ENCODE measurements at regions of chr6 and their contacts with region 1.

Region 1: GRCh38 chr6:16761471-16762267 is 409 bp upstream of the ATXN1 start:
- DNase-seq: peak; percentile 79
- H3K4me3 ChIP-seq: peak overlapping the region; percentile 58 to 81
- H3K27ac ChIP-seq: peak overlapping the region; percentile 77 to 90
- H3K4me1 ChIP-seq: peaks cover 12 to 28% of the 10 kb centered on the region in 2 experiments; a peak in 3 of 4 replicates
- H3K27me3 ChIP-seq: no peaks in the 10 kb centered on the region
- CTCF ChIP-seq: peak; percentile 51
- EP300 ChIP-seq: peak in 1 of 2 experiments; percentile 49; a peak in 1 of 4 replicates
- RAD21 ChIP-seq: peak; percentile 24; the same call in 1 of the 2 replicates

Region 2: DNA sequence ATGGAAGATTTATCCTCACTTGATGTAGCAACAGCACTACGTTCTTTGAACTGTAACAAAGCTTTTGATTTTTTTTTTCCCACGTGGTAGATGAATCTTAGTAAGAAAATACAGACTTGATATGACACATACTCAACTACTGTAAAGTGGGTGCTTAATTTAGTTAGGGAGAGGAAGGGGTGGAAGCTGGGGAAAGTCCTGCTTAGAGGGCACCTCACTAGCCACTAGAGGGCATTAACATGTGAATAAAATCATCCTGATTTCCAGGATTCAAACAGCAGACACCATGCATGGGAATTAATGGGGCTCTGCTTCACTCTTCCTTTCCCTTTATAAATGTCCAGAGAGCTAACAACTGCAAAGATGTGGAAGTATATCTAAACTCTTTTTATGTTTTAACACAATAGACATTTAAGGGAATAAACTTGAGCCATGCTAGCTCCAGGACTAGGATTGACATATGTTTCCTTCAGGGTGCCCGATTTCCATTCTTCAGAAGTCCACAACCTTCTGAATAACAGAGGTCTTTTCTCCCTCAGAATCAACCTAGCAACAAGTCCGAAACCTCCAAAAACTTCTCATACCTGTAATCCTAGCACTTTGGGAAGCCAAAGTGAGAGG is 250.5 kb before region 1 on chr6:
- CTCF ChIA-PET with region 1: interaction called, 33 read pairs
- POLR2A ChIA-PET with region 1: no interaction called
- DNase-seq: peak; percentile 38
- H3K4me3 ChIP-seq: no peak overlapping the region
- H3K27ac ChIP-seq: no peak overlapping the region
- H3K4me1 ChIP-seq: peaks cover 2 to 3% of the 10 kb centered on the region in 2 experiments; a peak in 2 of 4 replicates
- H3K27me3 ChIP-seq: no peaks in the 10 kb centered on the region
- CTCF ChIP-seq: peak; percentile 75
- EP300 ChIP-seq: no peak
- RAD21 ChIP-seq: peak; percentile 54

Region 3: DNA sequence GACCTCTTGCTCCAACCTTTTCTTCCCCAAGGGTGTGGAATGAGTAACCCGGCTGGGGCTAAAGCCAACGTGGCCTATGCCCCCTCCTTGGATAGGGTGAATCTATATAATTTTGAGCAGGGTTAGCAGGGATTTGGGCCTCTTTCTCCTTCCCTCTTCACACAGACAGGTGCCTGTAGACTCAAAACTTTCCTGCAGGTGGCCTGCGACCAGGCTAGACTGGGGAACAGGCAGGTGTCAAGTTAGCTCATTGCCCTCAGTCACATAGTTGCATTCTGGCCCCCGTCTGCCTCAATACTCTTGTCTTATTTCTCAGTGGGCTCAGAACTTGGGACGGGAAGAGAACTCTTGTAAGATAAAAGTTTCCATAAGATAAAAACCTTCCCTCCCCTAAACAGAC is 243.4 kb before region 1 on chr6:
- CTCF ChIA-PET with region 1: interaction called, 33 read pairs
- POLR2A ChIA-PET with region 1: no interaction called
- DNase-seq: no peak
- H3K4me3 ChIP-seq: no peak overlapping the region
- H3K27ac ChIP-seq: no peak overlapping the region
- H3K4me1 ChIP-seq: peaks cover 3 to 4% of the 10 kb centered on the region in 2 experiments; a peak in 1 of 4 replicates
- H3K27me3 ChIP-seq: no peaks in the 10 kb centered on the region
- CTCF ChIP-seq: no peak
- EP300 ChIP-seq: no peak
- RAD21 ChIP-seq: no peak

Region 4: GRCh38 chr6:16747232-16748024 is 14.2 kb before region 1 on chr6:
- CTCF ChIA-PET with region 1: interaction called, 10 read pairs
- POLR2A ChIA-PET with region 1: no interaction called
- DNase-seq: no peak
- H3K4me3 ChIP-seq: no peak overlapping the region
- H3K27ac ChIP-seq: peak overlapping the region in 1 of 2 experiments; percentile 70; a peak in 2 of 4 replicates
- H3K4me1 ChIP-seq: peaks cover 0 to 46% of the 10 kb centered on the region in 2 experiments; a peak in 3 of 4 replicates
- H3K27me3 ChIP-seq: no peaks in the 10 kb centered on the region
- CTCF ChIP-seq: no peak
- EP300 ChIP-seq: no peak
- RAD21 ChIP-seq: no peak

Region 5: GRCh38 chr6:16964553-16965501 is 203.2 kb after region 1 on chr6:
- CTCF ChIA-PET with region 1: interaction called, 48 read pairs
- POLR2A ChIA-PET with region 1: no interaction called
- DNase-seq: peak; percentile 70
- H3K4me3 ChIP-seq: no peak overlapping the region; a peak in 2 of 4 replicates
- H3K27ac ChIP-seq: no peak overlapping the region
- H3K4me1 ChIP-seq: peaks cover 5 to 30% of the 10 kb centered on the region in 2 experiments
- H3K27me3 ChIP-seq: no peaks in the 10 kb centered on the region
- CTCF ChIP-seq: peak; percentile 94
- EP300 ChIP-seq: no peak
- RAD21 ChIP-seq: peak; percentile 87